ENCODE measurements at regions of chr6 and their contacts with region 1.

Region 1: DNA sequence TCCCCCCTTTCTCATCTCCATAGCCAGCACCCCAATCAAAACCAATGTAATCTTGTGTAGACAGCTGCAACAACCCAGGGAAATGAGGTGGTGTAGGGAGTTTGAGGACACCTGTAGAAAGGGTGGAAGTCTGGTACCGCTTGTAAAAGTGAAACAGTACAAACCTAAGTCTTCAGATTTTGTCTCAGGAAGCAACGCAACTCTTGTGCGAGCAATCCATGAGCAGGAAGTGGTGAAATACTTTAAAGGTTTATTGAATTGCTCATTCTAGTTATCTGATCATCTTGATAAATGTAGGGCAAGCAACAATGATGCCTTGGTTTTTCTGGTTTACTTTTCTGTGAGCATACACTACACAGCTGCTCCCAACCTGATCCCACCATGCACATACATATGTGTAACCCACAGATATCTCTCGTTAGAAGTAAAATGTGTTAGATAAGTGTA is 71.1 kb upstream of the THEMIS start:
- DNase-seq: peak; percentile 67
- H3K4me3 Mint-ChIP-seq: peak overlapping the region; percentile 78
- H3K27ac Mint-ChIP-seq: peak overlapping the region; percentile 97
- H3K4me1 Mint-ChIP-seq: peaks cover 64% of the 10 kb centered on the region
- H3K27me3 Mint-ChIP-seq: no peaks in the 10 kb centered on the region

Region 2: DNA sequence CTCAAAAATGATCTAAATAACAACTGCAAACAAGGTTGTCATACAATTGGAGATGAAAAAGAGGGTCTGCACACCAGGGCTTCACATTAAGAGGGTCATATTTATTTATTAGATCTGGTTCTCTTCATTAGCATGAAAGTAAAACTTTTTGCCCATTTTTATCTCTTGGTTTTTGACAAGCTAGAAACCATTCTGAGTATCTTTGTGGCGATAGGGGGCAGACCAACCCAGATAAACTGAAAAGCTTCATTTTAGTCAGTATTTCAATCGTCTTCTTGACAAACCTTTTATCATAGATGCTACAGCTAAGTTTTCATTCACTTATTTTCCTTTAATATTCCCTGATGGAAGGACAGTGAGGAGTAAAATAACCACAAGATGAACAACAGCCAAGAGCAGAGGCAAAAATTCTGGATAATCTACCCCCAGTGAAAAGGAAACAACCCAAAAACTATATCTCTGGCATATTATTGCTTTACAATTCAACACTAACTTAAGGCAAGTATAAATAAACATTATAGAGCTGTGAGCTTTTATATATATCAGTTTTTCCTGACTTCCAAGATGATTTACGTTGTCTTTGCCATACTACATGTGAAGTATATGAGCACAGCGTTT is 116.3 kb before region 1 on chr6:
- CTCF ChIA-PET with region 1: interaction called, 12 read pairs
- POLR2A ChIA-PET with region 1: interaction called, 5 read pairs
- DNase-seq: peak; percentile 50
- H3K4me3 Mint-ChIP-seq: no peak overlapping the region
- H3K27ac Mint-ChIP-seq: peak overlapping the region; percentile 12
- H3K4me1 Mint-ChIP-seq: peaks cover 35% of the 10 kb centered on the region
- H3K27me3 Mint-ChIP-seq: no peaks in the 10 kb centered on the region

Region 3: GRCh38 chr6:127900935-127901334 is 71.0 kb before region 1 on chr6 and contains the start of gene THEMIS:
- CTCF ChIA-PET with region 1: interaction called, 12 read pairs
- POLR2A ChIA-PET with region 1: interaction called, 36 read pairs
- DNase-seq: peak; percentile 61
- H3K4me3 Mint-ChIP-seq: peak within 1 kb of the TSS; percentile 93
- H3K27ac Mint-ChIP-seq: peak within 1 kb of the TSS; percentile 91
- H3K4me1 Mint-ChIP-seq: peaks cover 58% of the 10 kb centered on the region
- H3K27me3 Mint-ChIP-seq: no peaks in the 10 kb centered on the region
- total RNA-seq, gene THEMIS: 65.6 to 68.2 TPM

Region 4: DNA sequence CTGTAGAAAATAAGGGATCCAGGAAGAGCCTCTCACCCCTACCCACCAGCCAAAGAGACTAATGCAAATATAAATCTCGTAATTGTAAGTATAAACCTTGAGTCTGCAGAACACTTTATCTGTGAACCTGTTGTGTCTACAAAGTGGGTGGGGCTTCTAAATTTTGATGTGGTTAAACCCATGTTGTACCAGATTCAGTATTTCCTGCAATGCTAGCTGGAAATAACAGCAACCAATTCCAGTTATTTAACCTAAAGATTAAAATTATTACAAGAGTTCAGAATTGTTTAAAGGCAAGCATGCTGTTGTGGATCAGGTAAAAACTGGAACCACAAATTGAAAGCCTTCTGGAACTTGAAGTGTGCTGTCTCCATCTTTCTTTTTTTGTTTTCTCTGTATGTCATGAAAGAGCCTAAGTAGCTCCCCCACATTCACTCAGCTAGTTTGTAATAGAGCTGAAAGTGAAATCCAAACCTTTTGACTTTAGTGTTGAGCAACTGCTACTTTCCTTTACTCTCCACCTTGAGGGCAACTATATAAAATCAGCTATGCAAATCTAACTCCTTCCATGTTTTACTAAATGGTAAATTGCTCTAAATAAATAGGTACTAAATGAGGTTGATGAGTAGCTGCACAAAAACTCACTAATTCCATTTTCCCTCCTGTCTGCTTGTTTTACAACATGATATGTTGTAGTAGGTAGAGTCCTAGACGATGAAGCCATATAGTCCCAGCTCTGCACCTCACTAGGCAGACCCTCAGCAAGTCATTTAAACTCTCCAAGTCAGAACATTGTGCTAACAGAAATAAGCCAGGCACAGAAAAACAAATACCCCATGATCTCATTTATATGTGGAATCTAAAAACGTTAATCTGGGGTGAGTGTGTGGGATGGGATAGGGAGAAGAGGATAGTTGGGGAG is 53.2 kb before region 1 on chr6:
- CTCF ChIA-PET with region 1: interaction called, 7 read pairs
- POLR2A ChIA-PET with region 1: interaction called, 16 read pairs
- DNase-seq: no peak
- H3K4me3 Mint-ChIP-seq: peak overlapping the region; percentile 54
- H3K27ac Mint-ChIP-seq: peak overlapping the region; percentile 62
- H3K4me1 Mint-ChIP-seq: peaks cover 74% of the 10 kb centered on the region
- H3K27me3 Mint-ChIP-seq: no peaks in the 10 kb centered on the region

Region 5: GRCh38 chr6:127951172-127951917 is 20.6 kb before region 1 on chr6:
- CTCF ChIA-PET with region 1: interaction called, 6 read pairs
- POLR2A ChIA-PET with region 1: interaction called, 44 read pairs
- DNase-seq: no peak
- H3K4me3 Mint-ChIP-seq: peak overlapping the region; percentile 17
- H3K27ac Mint-ChIP-seq: peak overlapping the region; percentile 94
- H3K4me1 Mint-ChIP-seq: peaks cover 56% of the 10 kb centered on the region
- H3K27me3 Mint-ChIP-seq: no peaks in the 10 kb centered on the region

Region 6: GRCh38 chr6:128005009-128005408 is 33.0 kb after region 1 on chr6:
- CTCF ChIA-PET with region 1: no interaction called
- POLR2A ChIA-PET with region 1: no interaction called
- DNase-seq: no peak
- H3K4me3 Mint-ChIP-seq: no peak overlapping the region
- H3K27ac Mint-ChIP-seq: no peak overlapping the region
- H3K4me1 Mint-ChIP-seq: no peaks in the 10 kb centered on the region
- H3K27me3 Mint-ChIP-seq: no peaks in the 10 kb centered on the region

Region 7: GRCh38 chr6:128295670-128296069 is 323.7 kb after region 1 on chr6:
- CTCF ChIA-PET with region 1: no interaction called
- POLR2A ChIA-PET with region 1: no interaction called
- DNase-seq: no peak
- H3K4me3 Mint-ChIP-seq: no peak overlapping the region
- H3K27ac Mint-ChIP-seq: no peak overlapping the region
- H3K4me1 Mint-ChIP-seq: no peaks in the 10 kb centered on the region
- H3K27me3 Mint-ChIP-seq: no peaks in the 10 kb centered on the region

Measured in activated CD4-positive, alpha-beta memory T cell treated with anti-CD3 and anti-CD28 coated beads, Interleukin-2, amount 10 ng/mL, durations not matched to agents 7 days and 5 days (primary cell).